BJ (cell line): ENCODE measurements at regions of chr21 and their contacts with region 1.

Region 1: GRCh38 chr21:27219068-27219467 is 252.2 kb upstream of the ADAMTS5 start:
- DNase-seq: no peak
- H3K4me3 ChIP-seq: no peak overlapping the region
- H3K27me3 ChIP-seq: no peaks in the 10 kb centered on the region
- CTCF ChIP-seq: no peak

Region 2: GRCh38 chr21:26887251-26887650 is 331.8 kb before region 1 on chr21:
- CTCF ChIA-PET with region 1: no interaction called
- POLR2A ChIA-PET with region 1: interaction called, 10 read pairs
- DNase-seq: peak; percentile 24
- H3K4me3 ChIP-seq: no peak overlapping the region
- H3K27me3 ChIP-seq: no peaks in the 10 kb centered on the region
- CTCF ChIP-seq: no peak

Region 3: GRCh38 chr21:27036736-27037301 is 182.2 kb before region 1 on chr21:
- CTCF ChIA-PET with region 1: no interaction called
- POLR2A ChIA-PET with region 1: no interaction called
- DNase-seq: no peak
- H3K4me3 ChIP-seq: no peak overlapping the region
- H3K27me3 ChIP-seq: no peaks in the 10 kb centered on the region
- CTCF ChIP-seq: no peak